ENCODE measurements at regions of chr20 and their contacts with region 1.

Region 1: GRCh38 chr20:6636209-6637159 is 131.0 kb upstream of the BMP2 start:
- DNase-seq: peak; percentile 67 to 73
- H3K4me3 ChIP-seq: no peak overlapping the region
- H3K4me3 Mint-ChIP-seq: no peak overlapping the region
- H3K27ac Mint-ChIP-seq: peak overlapping the region; percentile 79
- H3K4me1 ChIP-seq: peaks cover 19% of the 10 kb centered on the region
- H3K4me1 Mint-ChIP-seq: peaks cover 23% of the 10 kb centered on the region
- H3K27me3 ChIP-seq: no peaks in the 10 kb centered on the region
- H3K27me3 Mint-ChIP-seq: no peaks in the 10 kb centered on the region
- CTCF ChIP-seq: peak; percentile 67 to 85

Region 2: DNA sequence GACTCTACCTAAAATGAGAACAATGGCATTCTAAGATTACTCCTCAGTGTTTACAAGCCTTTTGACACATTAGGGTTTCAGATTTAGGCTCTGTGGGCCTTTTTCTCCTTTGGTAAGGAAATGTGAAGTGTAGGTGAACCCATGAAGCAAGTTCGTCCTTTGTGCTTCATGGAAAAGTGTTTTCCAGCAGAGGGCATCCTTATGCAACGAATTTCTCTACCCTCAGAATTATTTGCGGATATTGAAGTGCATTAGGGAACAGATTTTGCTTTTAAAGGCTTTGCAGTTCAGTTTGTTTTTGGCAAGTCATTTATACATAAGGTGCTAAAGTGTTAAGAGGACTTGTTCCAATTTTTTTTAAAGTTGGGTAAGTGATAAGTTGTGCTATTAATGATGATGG is 457.9 kb before region 1 on chr20:
- CTCF ChIA-PET with region 1: no interaction called
- POLR2A ChIA-PET with region 1: no interaction called
- intact Hi-C with region 1: loop called (anchors 1 kb)
- DNase-seq: peak in 1 of 2 experiments; percentile 29
- H3K4me3 ChIP-seq: no peak overlapping the region
- H3K4me3 Mint-ChIP-seq: no peak overlapping the region
- H3K27ac Mint-ChIP-seq: no peak overlapping the region
- H3K4me1 ChIP-seq: no peaks in the 10 kb centered on the region
- H3K4me1 Mint-ChIP-seq: no peaks in the 10 kb centered on the region
- H3K27me3 ChIP-seq: no peaks in the 10 kb centered on the region
- H3K27me3 Mint-ChIP-seq: peaks cover 12% of the 10 kb centered on the region
- CTCF ChIP-seq: peak; percentile 32 to 46

Region 3: DNA sequence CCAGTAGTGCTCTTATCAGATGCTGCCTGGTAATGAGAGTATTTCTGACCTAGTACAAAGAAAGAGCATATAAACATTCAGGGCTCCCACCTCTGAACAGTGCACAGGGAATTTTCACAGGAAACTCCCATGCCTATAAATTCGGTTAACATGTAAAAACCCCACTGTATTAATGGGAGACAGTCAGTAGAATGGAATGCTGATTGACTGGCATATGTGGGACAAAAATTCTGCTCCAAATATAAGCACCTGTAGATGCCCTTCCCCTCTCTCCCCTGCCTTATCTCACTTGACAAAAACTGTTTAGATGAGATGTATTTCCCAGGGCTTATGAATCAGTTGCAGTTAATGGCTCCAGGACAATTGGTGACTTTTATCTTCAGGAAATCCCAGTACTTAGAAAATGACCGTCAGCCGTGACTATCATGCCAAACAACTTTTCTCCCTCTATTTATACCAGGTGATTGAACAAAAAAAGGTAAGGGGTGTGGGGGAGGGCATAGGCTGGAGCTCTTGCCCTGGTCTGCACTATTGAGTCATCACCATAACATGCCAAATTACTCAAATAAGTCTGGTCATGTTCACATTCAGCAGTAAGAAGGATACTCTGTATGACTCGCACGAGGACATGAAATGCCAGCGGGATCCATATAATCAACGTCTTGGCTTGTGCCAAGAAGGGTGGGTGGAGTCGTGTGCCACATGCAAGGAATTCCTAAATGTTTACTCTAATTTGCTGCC is 45.4 kb before region 1 on chr20:
- CTCF ChIA-PET with region 1: no interaction called
- POLR2A ChIA-PET with region 1: no interaction called
- intact Hi-C with region 1: no loop called
- DNase-seq: no peak
- H3K4me3 ChIP-seq: no peak overlapping the region
- H3K4me3 Mint-ChIP-seq: no peak overlapping the region
- H3K27ac Mint-ChIP-seq: no peak overlapping the region
- H3K4me1 ChIP-seq: no peaks in the 10 kb centered on the region
- H3K4me1 Mint-ChIP-seq: no peaks in the 10 kb centered on the region
- H3K27me3 ChIP-seq: no peaks in the 10 kb centered on the region
- H3K27me3 Mint-ChIP-seq: peaks cover 3% of the 10 kb centered on the region
- CTCF ChIP-seq: no peak

Region 4: DNA sequence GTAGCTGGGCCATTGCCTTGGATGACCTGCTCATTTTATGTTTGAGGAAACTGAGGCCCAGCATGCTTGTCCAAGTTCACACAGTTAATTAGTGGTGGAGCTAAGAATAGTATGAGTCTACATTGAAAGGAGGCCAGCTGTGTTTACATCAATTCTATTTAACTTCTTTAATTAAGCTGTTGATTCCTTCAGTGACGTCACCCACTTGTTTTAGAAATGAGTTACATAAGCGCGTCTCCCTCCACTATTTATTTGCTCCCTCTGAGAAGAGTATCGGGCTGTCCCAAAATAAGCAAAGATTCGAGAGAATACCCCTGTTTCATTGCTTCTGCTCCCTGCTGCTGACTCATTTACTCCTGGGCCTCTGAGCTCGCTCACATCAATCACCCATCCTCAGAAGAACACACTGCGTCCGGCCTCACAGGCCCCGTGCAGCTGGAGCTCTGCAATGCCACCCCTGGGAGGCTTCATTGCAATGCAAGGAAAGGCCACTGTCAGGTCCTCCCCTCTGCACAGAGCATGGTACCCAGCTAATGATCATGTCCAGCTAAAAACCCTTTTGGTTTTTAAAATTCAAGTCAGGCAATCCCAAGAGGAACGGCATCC is 56.2 kb after region 1 on chr20:
- CTCF ChIA-PET with region 1: interaction called, 9 read pairs
- POLR2A ChIA-PET with region 1: no interaction called
- intact Hi-C with region 1: loop called (anchors 2 kb)
- DNase-seq: peak; percentile 45 to 51
- H3K4me3 ChIP-seq: no peak overlapping the region
- H3K4me3 Mint-ChIP-seq: no peak overlapping the region
- H3K27ac Mint-ChIP-seq: peak overlapping the region; percentile 99
- H3K4me1 ChIP-seq: peaks cover 55% of the 10 kb centered on the region
- H3K4me1 Mint-ChIP-seq: peaks cover 65% of the 10 kb centered on the region
- H3K27me3 ChIP-seq: no peaks in the 10 kb centered on the region
- H3K27me3 Mint-ChIP-seq: no peaks in the 10 kb centered on the region
- CTCF ChIP-seq: no peak

Region 5: DNA sequence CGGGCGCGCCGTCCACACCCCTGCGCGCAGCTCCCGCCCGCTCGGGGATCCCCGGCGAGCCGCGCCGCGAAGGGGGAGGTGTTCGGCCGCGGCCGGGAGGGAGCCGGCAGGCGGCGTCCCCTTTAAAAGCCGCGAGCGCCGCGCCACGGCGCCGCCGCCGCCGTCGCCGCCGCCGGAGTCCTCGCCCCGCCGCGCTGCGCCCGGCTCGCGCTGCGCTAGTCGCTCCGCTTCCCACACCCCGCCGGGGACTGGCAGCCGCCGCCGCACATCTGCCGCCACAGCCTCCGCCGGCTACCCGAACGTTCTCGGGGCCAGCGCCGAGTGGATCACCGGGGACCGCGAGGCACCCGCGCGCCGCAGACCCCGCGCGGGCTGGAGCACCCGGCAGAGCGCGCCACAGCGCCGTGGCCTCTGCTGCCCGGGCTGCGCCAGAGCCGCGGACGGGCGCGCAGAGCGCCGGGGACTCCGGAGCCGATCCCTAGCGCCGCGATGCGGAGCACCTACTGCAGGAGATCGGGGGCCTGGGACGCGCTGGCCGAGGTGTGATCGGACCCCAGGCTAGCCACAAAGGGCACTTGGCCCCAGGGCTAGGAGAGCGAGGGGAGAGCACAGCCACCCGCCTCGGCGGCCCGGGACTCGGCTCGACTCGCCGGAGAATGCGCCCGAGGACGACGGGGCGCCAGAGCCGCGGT is 131.2 kb after region 1 on chr20 and contains the start of gene BMP2:
- CTCF ChIA-PET with region 1: interaction called, 4 read pairs
- POLR2A ChIA-PET with region 1: no interaction called
- intact Hi-C with region 1: loop called (anchors 1 kb)
- DNase-seq: peak; percentile 63 to 79
- H3K4me3 ChIP-seq: peak within 1 kb of the TSS; percentile 96
- H3K4me3 Mint-ChIP-seq: peak within 1 kb of the TSS; percentile 92
- H3K27ac Mint-ChIP-seq: peak within 1 kb of the TSS; percentile 53
- H3K4me1 ChIP-seq: peaks cover 21% of the 10 kb centered on the region
- H3K4me1 Mint-ChIP-seq: peaks cover 33% of the 10 kb centered on the region
- H3K27me3 ChIP-seq: no peaks in the 10 kb centered on the region
- H3K27me3 Mint-ChIP-seq: no peaks in the 10 kb centered on the region
- CTCF ChIP-seq: no peak
- total RNA-seq, gene BMP2: 24.3 and 27.3 TPM in 2 replicates

Region 6: DNA sequence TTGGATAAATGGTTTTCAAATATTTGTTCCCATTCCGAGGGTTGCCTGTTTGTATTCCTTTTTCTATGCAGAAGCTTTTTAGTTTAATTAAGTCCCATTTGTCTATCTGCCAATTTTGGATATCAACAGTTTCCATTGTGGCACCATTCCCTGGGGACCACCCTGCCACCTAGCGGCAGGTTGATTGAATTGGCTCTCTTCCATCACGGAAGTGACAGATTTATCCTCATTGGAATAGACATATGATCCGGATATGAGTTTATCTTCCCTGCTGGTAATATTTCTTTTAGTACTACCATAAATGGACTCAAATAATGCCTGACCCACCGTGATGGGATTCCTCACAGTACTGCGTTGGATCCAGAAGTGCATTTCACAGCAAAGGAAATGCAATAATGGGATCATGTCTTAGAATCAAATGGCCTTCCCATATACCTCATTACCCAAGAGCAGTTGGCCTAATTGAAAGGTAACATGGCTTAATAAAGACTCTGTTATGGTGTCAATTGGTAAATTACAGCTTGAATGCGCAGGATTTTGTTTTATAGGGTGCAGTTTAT is 458.0 kb after region 1 on chr20:
- CTCF ChIA-PET with region 1: no interaction called
- POLR2A ChIA-PET with region 1: no interaction called
- intact Hi-C with region 1: loop called (anchors 2 kb)
- DNase-seq: peak; percentile 48 to 75
- H3K4me3 ChIP-seq: no peak overlapping the region
- H3K4me3 Mint-ChIP-seq: no peak overlapping the region
- H3K27ac Mint-ChIP-seq: no peak overlapping the region
- H3K4me1 ChIP-seq: peaks cover 21% of the 10 kb centered on the region
- H3K4me1 Mint-ChIP-seq: peaks cover 6% of the 10 kb centered on the region
- H3K27me3 ChIP-seq: no peaks in the 10 kb centered on the region
- H3K27me3 Mint-ChIP-seq: peaks cover 2% of the 10 kb centered on the region
- CTCF ChIP-seq: peak; percentile 85 to 88

Measured in Caco-2 (cell line).